Vagina (tissue), 2 donors: ENCODE measurements at regions of chr3 and their contacts with region 1.

Region 1: GRCh38 chr3:129927072-129927471 is 33.6 kb upstream of the TMCC1 start:
- DNase-seq: no peak
- H3K4me3 ChIP-seq: no peak overlapping the region
- H3K27ac ChIP-seq: no peak overlapping the region
- H3K4me1 ChIP-seq: no peaks in the 10 kb centered on the region
- H3K27me3 ChIP-seq: no peaks in the 10 kb centered on the region
- CTCF ChIP-seq: no peak
- POLR2A ChIP-seq: no peak

Region 2: DNA sequence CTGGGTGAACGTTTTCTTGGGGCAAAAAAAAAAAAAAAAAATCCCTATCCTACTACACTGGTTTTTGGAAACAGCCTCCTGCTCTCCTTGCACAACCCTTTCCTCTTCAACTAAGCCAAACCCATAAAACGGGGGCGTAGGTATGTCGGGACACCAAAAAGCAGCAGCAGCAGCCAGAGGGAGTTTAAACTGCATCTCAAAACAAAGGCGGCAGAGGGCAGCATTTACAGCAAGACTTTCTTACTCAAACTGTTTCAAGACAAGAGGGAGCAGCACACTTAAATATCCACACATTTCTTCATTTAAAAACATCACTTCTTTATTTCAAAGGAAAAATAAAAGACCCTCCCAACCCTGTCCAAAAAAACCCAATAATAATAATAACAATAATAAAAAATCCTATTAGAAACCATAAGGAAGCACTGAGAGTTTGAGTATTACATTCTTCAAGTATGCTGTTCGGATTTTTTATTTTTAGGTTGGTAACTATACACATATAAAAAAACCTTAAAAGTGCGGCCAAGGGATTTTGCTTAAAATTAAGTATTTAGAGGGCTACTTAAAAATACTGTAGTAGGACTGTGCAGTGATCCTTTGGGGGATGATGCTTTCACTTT is 276.7 kb before region 1 on chr3:
- intact Hi-C with region 1: loop called (anchors 10 kb)
- DNase-seq: peak in 1 of 2 donors; percentile 92
- H3K4me3 ChIP-seq: no peak overlapping the region
- H3K27ac ChIP-seq: no peak overlapping the region
- H3K4me1 ChIP-seq: peaks cover 17% of the 10 kb centered on the region
- H3K27me3 ChIP-seq: no peaks in the 10 kb centered on the region
- CTCF ChIP-seq: peak; percentile 39 to 90 (median 80)
- POLR2A ChIP-seq: no peak

Region 3: GRCh38 chr3:130010556-130010955 is 83.5 kb after region 1 on chr3:
- intact Hi-C with region 1: no loop called
- DNase-seq: no peak
- H3K4me3 ChIP-seq: no peak overlapping the region
- H3K27ac ChIP-seq: no peak overlapping the region
- H3K4me1 ChIP-seq: no peaks in the 10 kb centered on the region
- H3K27me3 ChIP-seq: no peaks in the 10 kb centered on the region
- CTCF ChIP-seq: no peak
- POLR2A ChIP-seq: no peak